ENCODE measurements at regions of chr6 and their contacts with region 1.

Region 1: DNA sequence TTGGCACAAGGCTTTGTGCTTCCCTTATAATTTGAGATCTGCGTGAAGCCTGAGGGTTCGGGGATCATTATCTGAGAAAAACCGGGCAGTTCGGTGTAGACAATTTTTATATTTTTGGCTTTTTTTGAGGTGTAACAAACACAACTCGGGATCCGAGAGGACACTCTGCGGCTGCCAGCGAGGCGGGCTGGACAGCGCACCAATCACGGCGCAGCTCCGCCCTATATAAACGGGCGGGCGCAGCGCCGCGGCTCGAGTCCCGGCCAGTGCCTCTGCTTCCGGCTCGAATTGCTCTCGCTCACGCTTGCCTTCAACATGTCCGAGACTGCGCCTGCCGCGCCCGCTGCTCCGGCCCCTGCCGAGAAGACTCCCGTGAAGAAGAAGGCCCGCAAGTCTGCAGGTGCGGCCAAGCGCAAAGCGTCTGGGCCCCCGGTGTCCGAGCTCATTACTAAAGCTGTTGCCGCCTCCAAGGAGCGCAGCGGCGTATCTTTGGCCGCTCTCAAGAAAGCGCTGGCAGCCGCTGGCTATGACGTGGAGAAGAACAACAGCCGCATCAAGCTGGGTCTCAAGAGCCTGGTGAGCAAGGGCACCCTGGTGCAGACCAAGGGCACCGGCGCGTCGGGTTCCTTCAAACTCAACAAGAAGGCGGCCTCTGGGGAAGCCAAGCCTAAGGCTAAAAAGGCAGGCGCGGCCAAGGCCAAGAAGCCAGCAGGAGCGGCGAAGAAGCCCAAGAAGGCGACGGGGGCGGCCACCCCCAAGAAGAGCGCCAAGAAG is 69.0 kb downstream of the HFE start:
- DNase-seq: peak; percentile 93 to 94
- H3K4me3 ChIP-seq: peak overlapping the region; percentile 76 to 81
- H3K27ac ChIP-seq: peak overlapping the region; percentile 97 to 99
- H3K4me1 ChIP-seq: no peaks in the 10 kb centered on the region
- H3K27me3 ChIP-seq: no peaks in the 10 kb centered on the region
- CTCF ChIP-seq: peak in 1 of 4 experiments; percentile 36
- POLR2A ChIP-seq: peak; percentile 97 to 100

Region 2: DNA sequence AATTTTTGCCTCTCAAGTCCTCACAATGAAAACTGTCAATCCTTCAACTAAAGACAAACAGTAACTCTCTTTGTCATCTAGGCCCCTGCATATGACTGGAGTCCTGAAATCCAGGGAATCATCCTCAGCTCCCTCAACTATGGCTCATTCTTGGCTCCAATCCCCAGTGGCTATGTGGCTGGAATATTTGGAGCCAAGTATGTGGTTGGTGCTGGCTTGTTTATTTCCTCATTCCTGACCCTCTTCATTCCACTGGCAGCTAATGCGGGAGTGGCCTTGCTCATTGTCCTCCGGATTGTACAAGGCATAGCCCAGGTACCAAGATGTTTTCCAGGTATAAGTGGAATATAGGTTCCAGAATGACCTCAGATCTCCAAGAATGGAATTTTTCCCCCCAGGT is 386.3 kb before region 1 on chr6:
- intact Hi-C with region 1: no loop called
- DNase-seq: no peak
- H3K4me3 ChIP-seq: no peak overlapping the region
- H3K27ac ChIP-seq: no peak overlapping the region
- H3K4me1 ChIP-seq: no peaks in the 10 kb centered on the region
- H3K27me3 ChIP-seq: no peaks in the 10 kb centered on the region
- CTCF ChIP-seq: no peak
- POLR2A ChIP-seq: no peak

Region 3: GRCh38 chr6:26103770-26104456 is 52.4 kb before region 1 on chr6:
- intact Hi-C with region 1: loop called (anchors 10 kb)
- DNase-seq: peak; percentile 89 to 94
- H3K4me3 ChIP-seq: peak overlapping the region; percentile 34 to 50
- H3K27ac ChIP-seq: peak overlapping the region; percentile 85 to 86
- H3K4me1 ChIP-seq: peaks cover 0 to 3% of the 10 kb centered on the region in 2 donors
- H3K27me3 ChIP-seq: no peaks in the 10 kb centered on the region
- CTCF ChIP-seq: peak in 3 of 4 experiments; percentile 27 to 34 (median 33)
- POLR2A ChIP-seq: peak; percentile 63 to 93

Region 4: GRCh38 chr6:26122793-26123674 is 33.2 kb before region 1 on chr6:
- intact Hi-C with region 1: loop called (anchors 2 kb)
- DNase-seq: peak; percentile 90 to 98
- H3K4me3 ChIP-seq: peak overlapping the region; percentile 83 to 98
- H3K27ac ChIP-seq: peak overlapping the region; percentile 96 to 98
- H3K4me1 ChIP-seq: no peaks in the 10 kb centered on the region
- H3K27me3 ChIP-seq: peaks cover 0 to 3% of the 10 kb centered on the region in 2 donors
- CTCF ChIP-seq: peak in 1 of 4 experiments; percentile 18
- POLR2A ChIP-seq: peak; percentile 63 to 69

Region 5: GRCh38 chr6:26223650-26224546 is 67.6 kb after region 1 on chr6:
- intact Hi-C with region 1: no loop called
- DNase-seq: peak; percentile 56 to 80
- H3K4me3 ChIP-seq: peak overlapping the region; percentile 42 to 48
- H3K27ac ChIP-seq: peak overlapping the region; percentile 86 to 88
- H3K4me1 ChIP-seq: no peaks in the 10 kb centered on the region
- H3K27me3 ChIP-seq: peaks cover 0 to 5% of the 10 kb centered on the region in 2 donors
- CTCF ChIP-seq: no peak
- POLR2A ChIP-seq: peak; percentile 72 to 84

Region 6: DNA sequence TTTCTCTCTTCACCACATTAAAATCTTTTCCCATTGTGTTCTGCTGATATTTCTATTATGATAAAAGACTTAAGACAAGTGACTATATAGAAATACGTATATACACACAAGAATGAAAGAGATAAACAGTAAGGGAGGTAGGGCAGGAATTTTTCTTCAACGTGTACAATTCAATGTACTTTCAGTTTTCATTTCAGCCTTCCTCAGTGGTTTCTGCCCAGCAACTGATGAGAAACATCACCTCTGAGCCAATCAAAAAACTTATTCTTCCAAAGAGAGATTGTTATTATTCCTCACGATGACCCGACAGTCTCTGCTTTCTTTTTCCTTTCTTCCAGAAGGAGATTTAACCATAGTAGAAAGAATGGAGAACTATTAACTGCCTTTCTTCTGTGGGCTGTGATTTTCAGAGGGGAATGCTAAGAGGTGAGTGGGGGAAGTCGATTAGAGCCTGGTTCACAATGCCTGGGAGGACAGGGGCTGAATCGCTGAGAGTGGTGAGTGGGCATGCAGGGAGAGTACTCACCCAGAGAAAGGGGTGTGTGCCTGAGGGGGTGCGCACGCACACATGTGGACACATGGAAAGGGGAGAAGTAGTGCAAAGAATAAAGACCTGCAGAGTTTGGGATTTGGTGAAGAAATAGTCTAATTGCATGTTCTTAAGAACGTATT is 245.9 kb after region 1 on chr6 and contains the start of gene BTN3A1:
- intact Hi-C with region 1: no loop called
- DNase-seq: peak; percentile 60 to 73
- H3K4me3 ChIP-seq: peak within 1 kb of the TSS; percentile 52 to 66
- H3K27ac ChIP-seq: peak within 1 kb of the TSS; percentile 88 to 93
- H3K4me1 ChIP-seq: no peaks in the 10 kb centered on the region
- H3K27me3 ChIP-seq: no peaks in the 10 kb centered on the region
- CTCF ChIP-seq: no peak
- POLR2A ChIP-seq: peak; percentile 18 to 26
- total RNA-seq, gene BTN3A1: 9.1 to 64.2 (median 20.8) TPM